ENCODE measurements at regions of chr4 and their contacts with region 1.

Region 1: DNA sequence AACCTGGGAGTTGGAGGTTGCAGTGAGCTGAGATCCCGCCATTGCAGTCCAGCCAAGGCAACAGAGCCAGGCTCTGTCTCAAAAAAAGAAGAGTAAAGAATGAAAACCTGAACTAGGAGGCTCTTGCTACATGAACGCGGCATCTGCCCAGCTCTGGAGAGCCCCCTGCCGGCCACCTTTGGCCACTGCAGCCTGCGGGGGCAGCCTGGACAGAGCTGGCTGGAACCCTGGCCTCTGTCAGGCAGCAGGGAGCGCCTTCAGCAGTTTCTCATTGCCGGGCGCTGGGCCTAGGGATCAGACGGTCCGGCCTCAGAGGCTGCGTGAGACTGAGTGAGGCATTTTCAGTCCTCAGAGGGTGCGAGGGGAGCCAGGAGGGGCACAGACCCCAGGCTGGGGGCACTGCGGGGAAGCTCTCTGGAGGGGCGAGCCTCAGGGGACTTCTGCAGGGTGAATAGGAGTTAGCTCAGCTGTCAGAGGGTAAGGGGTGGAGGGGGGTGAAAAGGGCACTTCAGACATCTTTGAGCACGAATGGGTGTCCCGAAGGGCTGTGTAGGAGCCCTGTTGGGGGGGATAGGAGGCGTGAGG is 17.5 kb downstream of the DOK7 start:
- DNase-seq: peak; percentile 80
- ATAC-seq: peak; percentile 25
- H3K4me3 ChIP-seq: no peak overlapping the region
- H3K4me3 Mint-ChIP-seq: peak overlapping the region; percentile 29
- H3K27ac ChIP-seq: no peak overlapping the region
- H3K27ac Mint-ChIP-seq: peak overlapping the region; percentile 20
- H3K4me1 ChIP-seq: peaks cover 36 to 55% of the 10 kb centered on the region in 2 donors
- H3K4me1 Mint-ChIP-seq: peaks cover 43% of the 10 kb centered on the region
- H3K27me3 ChIP-seq: peaks cover 0 to 5% (median 1%) of the 10 kb centered on the region in 4 experiments
- H3K27me3 Mint-ChIP-seq: no peaks in the 10 kb centered on the region
- CTCF ChIP-seq: peak; percentile 99

Region 2: GRCh38 chr4:2936653-2937145 is 543.9 kb before region 1 on chr4:
- CTCF ChIA-PET with region 1: no interaction called
- POLR2A ChIA-PET with region 1: no interaction called
- intact Hi-C with region 1: no loop called
- DNase-seq: no peak
- ATAC-seq: no peak
- H3K4me3 ChIP-seq: no peak overlapping the region
- H3K4me3 Mint-ChIP-seq: peak overlapping the region; percentile 89
- H3K27ac ChIP-seq: peak overlapping the region; percentile 1 to 5
- H3K27ac Mint-ChIP-seq: peak overlapping the region; percentile 81
- H3K4me1 ChIP-seq: peaks cover 31 to 48% of the 10 kb centered on the region in 2 donors
- H3K4me1 Mint-ChIP-seq: peaks cover 45% of the 10 kb centered on the region
- H3K27me3 ChIP-seq: no peaks in the 10 kb centered on the region
- H3K27me3 Mint-ChIP-seq: no peaks in the 10 kb centered on the region
- CTCF ChIP-seq: no peak

Region 3: GRCh38 chr4:3106339-3107186 is 374.1 kb before region 1 on chr4:
- CTCF ChIA-PET with region 1: interaction called, 7 read pairs
- POLR2A ChIA-PET with region 1: no interaction called
- intact Hi-C with region 1: loop called (anchors 1 kb)
- DNase-seq: peak; percentile 86
- ATAC-seq: peak; percentile 99
- H3K4me3 ChIP-seq: no peak overlapping the region
- H3K4me3 Mint-ChIP-seq: no peak overlapping the region
- H3K27ac ChIP-seq: no peak overlapping the region
- H3K27ac Mint-ChIP-seq: peak overlapping the region; percentile 82
- H3K4me1 ChIP-seq: peaks cover 0 to 6% of the 10 kb centered on the region in 2 donors
- H3K4me1 Mint-ChIP-seq: peaks cover 8% of the 10 kb centered on the region
- H3K27me3 ChIP-seq: no peaks in the 10 kb centered on the region
- H3K27me3 Mint-ChIP-seq: no peaks in the 10 kb centered on the region
- CTCF ChIP-seq: peak; percentile 96

Region 4: GRCh38 chr4:3346146-3346545 is 134.5 kb before region 1 on chr4:
- CTCF ChIA-PET with region 1: interaction called, 57 read pairs
- POLR2A ChIA-PET with region 1: no interaction called
- intact Hi-C with region 1: loop called (anchors 1 kb)
- DNase-seq: peak; percentile 82
- ATAC-seq: peak; percentile 70
- H3K4me3 ChIP-seq: no peak overlapping the region
- H3K4me3 Mint-ChIP-seq: no peak overlapping the region
- H3K27ac ChIP-seq: no peak overlapping the region
- H3K27ac Mint-ChIP-seq: no peak overlapping the region
- H3K4me1 ChIP-seq: peaks cover 0 to 4% of the 10 kb centered on the region in 2 donors
- H3K4me1 Mint-ChIP-seq: peaks cover 7% of the 10 kb centered on the region
- H3K27me3 ChIP-seq: no peaks in the 10 kb centered on the region
- H3K27me3 Mint-ChIP-seq: no peaks in the 10 kb centered on the region
- CTCF ChIP-seq: peak; percentile 99

Region 5: DNA sequence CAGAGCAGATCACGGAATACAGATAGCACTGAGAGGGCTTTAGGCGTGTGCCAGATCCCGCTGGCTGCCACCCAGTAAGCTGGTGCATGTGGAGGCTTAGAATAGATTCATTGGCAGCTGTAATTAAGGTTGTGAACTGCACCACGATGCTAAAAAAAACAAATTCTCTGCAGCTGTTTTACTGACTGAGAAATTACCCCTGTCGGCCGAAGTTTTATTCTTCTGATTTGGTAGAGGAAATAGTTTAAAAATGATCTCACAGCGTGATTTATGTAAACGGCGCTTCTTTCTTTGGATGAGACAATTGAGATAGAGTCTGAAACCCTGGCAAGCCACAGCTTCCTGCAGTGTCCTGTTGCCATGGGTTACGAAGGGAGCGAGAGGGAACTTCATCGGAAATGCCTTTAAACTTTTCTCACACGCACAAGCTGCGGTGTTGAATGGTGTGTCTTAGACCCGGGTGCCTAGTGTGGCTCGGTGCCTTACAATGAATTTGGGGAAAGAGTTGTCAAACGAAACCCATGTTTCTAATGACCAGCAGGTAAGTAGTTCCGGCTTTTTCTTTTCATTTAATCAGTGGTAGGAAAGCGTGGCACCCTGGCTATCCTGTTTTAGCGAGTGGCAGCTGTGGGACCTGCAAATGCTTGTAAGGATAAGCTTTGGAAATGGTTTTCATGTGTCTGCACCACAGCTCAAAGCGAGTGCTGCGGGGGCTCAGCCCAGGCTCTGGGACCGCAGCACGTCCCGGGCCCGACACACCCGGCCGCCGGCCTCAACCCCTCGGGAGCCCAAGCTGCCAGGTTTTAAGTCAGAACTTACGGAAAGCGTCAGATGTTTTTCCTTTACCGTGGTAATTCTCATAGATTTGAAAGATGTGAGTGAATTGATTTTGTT is 110.6 kb before region 1 on chr4:
- CTCF ChIA-PET with region 1: interaction called, 5 read pairs
- POLR2A ChIA-PET with region 1: interaction called, 3 read pairs
- intact Hi-C with region 1: loop called (anchors 1 kb)
- DNase-seq: no peak
- ATAC-seq: no peak
- H3K4me3 ChIP-seq: no peak overlapping the region
- H3K4me3 Mint-ChIP-seq: peak overlapping the region; percentile 18
- H3K27ac ChIP-seq: no peak overlapping the region
- H3K27ac Mint-ChIP-seq: no peak overlapping the region
- H3K4me1 ChIP-seq: peaks cover 28 to 42% of the 10 kb centered on the region in 2 donors
- H3K4me1 Mint-ChIP-seq: peaks cover 35% of the 10 kb centered on the region
- H3K27me3 ChIP-seq: peaks cover 0 to 25% (median 3%) of the 10 kb centered on the region in 4 experiments
- H3K27me3 Mint-ChIP-seq: peaks cover 10% of the 10 kb centered on the region
- CTCF ChIP-seq: no peak

Region 6: GRCh38 chr4:3442959-3443749 is 37.5 kb before region 1 on chr4:
- CTCF ChIA-PET with region 1: interaction called, 10 read pairs
- POLR2A ChIA-PET with region 1: no interaction called
- intact Hi-C with region 1: no loop called
- DNase-seq: peak; percentile 77
- ATAC-seq: peak; percentile 85
- H3K4me3 ChIP-seq: no peak overlapping the region
- H3K4me3 Mint-ChIP-seq: no peak overlapping the region
- H3K27ac ChIP-seq: no peak overlapping the region
- H3K27ac Mint-ChIP-seq: no peak overlapping the region
- H3K4me1 ChIP-seq: peaks cover 0 to 10% of the 10 kb centered on the region in 2 donors
- H3K4me1 Mint-ChIP-seq: no peaks in the 10 kb centered on the region
- H3K27me3 ChIP-seq: peaks cover 0 to 5% (median 0%) of the 10 kb centered on the region in 4 experiments
- H3K27me3 Mint-ChIP-seq: no peaks in the 10 kb centered on the region
- CTCF ChIP-seq: peak; percentile 98

Region 7: DNA sequence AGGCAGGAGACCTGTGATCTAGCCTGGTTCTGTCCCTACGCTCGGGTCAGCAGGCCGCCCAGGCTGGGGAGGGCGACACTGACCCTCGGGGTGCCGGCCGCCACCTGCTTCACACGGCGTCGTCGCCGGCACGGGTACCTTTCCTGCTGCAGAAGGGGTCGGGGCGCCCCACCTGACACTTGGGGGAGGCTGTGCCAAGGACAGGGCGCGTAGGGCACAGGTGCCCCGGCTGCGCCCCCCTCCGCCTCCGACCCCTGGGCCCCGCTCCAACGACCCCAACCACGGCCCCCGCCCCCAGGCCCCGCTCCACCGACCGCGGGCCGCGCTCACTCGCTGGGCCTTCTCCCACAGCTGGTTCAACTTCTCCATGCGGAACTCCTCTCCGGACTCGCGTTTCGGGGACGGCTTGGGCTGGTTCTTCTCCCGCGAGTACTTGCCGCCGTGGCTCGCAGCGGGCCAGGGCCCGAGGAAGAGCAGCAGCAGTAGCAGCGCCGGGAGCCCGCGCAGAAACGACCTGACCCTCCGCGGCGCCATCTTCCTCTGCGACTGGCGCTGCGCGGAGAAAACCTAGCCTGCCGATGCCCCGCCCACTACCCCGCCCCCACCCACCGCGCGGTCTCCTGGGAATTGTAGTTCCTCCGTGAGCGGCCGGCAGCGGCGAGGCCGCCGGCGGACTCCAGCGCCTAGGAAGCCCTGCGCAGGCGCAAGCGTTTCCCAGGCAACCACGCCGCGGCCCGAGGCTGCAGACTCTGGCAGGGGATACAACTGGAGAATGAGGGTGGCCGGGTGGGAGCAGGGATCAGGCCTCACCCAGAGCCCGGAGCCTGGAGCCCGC is 51.5 kb after region 1 on chr4 and contains the start of gene LRPAP1:
- CTCF ChIA-PET with region 1: interaction called, 3 read pairs
- POLR2A ChIA-PET with region 1: interaction called, 6 read pairs
- intact Hi-C with region 1: loop called (anchors 1 kb)
- DNase-seq: peak; percentile 92
- ATAC-seq: peak; percentile 91
- H3K4me3 ChIP-seq: peak within 1 kb of the TSS; percentile 70 to 98 (median 85)
- H3K4me3 Mint-ChIP-seq: peak within 1 kb of the TSS; percentile 100
- H3K27ac ChIP-seq: peak within 1 kb of the TSS; percentile 62 to 76
- H3K27ac Mint-ChIP-seq: peak within 1 kb of the TSS; percentile 96
- H3K4me1 ChIP-seq: peaks cover 29 to 46% of the 10 kb centered on the region in 2 donors
- H3K4me1 Mint-ChIP-seq: peaks cover 39% of the 10 kb centered on the region
- H3K27me3 ChIP-seq: peaks cover 0 to 3% (median 0%) of the 10 kb centered on the region in 4 experiments
- H3K27me3 Mint-ChIP-seq: peaks cover 5% of the 10 kb centered on the region
- CTCF ChIP-seq: no peak
- total RNA-seq, gene LRPAP1: 86.6 and 86.8 TPM in 2 replicates